ENCODE measurements at regions of chr15 and their contacts with region 1.

Region 1: DNA sequence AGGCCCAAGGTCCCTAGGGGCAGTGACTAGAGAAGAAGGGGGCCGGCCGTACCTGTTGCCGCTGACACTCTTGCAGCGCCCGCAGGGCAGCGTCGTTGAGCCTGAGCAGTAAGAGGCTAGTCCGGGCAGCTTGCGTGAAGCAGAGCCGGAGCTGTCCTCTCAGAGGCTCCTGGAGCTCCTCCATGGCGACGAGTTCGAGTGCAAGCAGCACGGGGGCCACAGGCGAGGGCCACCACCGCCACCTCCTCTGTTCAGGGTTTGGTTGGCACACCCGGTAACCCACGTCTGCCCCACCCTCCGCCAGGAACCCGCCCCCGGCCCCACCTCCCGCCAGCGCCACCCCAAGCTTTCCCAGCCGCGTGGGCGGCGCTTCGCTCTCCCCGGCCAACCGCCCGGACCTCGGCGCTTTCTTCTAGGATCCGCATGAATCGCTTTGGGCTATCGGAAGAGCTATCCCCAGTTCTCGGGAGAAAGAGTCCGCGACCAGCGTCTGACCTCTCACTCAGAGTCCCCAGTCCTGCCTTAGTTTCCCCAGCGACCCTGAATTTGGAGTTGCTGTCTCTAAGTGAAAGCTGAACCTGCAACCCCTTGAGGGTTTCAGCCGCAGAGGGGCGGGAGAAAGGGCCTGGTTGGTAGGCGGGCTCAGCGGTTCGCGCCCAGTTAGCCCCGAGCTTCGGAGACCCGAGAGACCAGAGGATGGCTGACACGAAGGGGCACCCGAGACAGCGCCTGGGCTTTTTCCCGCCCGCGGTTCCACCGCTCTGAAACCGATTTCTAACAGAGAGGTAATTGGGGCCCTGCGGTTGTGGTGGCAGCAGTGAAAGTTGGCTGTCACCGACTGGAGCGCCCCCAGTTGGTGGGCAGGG is at the start of gene ELL3:
- DNase-seq: peak; percentile 55

Region 2: DNA sequence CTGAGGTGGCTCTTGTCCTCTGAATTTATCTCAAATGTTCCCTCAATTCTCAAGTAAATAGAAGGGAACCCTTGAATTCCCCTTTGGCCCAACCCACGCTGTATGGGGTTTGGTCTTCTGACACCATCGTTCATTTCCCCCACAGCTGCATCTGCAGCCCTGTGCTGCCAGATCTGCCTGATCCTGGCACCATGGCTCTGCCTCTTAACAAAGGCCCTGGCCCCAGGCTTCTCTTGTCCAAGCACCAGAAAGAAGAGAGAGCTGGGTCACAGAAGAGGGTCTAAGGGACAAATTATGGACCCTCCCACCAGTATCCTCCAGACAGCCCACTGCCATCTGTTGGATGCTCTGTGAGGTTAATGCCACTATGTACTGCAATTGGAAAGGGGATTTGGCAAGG is 257.8 kb before region 1 on chr15:
- CTCF ChIA-PET with region 1: no interaction called
- POLR2A ChIA-PET with region 1: no interaction called
- DNase-seq: no peak

Region 3: DNA sequence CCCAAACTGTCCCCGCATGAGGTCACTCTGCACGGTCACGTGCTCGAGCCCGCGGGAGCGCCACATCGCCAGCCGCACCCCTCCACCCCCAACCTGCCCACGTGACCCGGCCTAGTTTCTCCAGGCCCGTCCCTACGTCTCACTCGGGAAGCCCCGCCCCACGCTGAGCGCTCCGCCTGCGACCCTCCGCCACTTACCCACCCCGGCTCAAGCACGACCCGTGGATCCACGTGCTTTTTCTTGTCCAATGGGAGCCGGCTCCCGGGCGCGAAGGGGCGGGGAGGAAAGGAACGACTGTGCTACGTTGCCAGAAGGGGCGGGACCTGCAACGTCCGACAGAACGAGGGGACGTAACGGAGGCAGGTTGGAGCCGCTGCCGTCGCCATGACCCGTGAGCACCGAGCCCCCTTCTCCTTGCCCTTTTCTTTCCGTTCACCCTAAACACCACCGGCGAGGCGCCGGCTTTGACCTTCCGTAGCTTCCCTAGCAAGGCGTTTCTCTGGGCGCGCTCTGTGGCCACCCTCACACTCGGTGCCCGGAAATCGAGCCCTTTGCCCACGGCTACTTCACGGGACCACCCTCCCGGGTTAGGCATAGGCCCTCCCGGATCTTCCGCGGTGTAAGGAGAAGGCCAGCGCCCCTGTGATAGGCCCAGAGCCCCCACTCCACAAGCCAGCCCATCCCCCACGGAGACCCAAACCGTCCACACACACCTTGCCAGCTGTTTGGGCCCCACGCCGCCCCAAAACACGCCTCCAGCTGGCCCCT is 15.2 kb after region 1 on chr15 and contains the start of gene SERF2:
- CTCF ChIA-PET with region 1: interaction called, 13 read pairs
- POLR2A ChIA-PET with region 1: interaction called, 33 read pairs
- DNase-seq: peak; percentile 92

Region 4: DNA sequence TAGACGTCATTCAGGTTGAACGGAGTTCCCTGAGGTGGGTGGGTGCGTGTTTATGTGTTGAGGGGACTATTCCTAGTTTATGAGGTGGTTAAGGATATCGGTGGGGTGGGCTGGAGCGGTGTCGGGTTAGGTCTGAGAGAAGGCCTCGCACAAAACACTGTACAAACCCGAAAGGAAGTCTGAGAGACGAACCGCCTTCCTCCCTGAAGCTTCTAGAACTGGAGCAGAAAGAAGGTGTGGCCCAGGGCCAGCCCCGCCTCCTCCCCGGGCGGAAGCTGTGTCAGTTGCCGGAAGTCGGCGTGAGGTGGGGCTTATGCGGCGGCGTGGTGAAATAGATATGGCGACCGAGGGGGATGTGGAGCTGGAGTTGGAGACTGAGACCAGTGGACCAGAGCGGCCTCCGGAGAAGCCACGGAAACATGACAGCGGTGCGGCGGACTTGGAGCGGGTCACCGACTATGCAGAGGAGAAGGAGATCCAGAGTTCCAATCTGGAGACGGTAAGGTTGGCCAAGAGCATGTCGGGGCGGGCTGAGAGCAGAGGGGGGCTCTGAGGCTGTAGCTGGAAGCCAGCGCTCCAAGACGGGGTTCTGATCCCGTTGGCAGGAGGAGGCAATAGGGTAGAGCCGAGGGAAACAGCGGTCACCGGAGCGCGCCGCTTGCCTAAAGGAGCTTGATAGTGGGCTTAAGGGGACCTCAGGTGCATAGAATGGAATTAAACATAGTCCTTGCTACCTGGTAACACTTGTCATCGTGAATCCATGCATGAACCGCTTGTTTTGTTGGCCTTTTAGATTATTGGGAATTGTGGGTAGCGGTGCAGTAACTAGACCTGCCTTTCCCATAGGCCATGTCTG is 23.6 kb after region 1 on chr15 and contains the start of gene HYPK:
- CTCF ChIA-PET with region 1: interaction called, 4 read pairs
- POLR2A ChIA-PET with region 1: interaction called, 11 read pairs
- DNase-seq: peak; percentile 70

Region 5: DNA sequence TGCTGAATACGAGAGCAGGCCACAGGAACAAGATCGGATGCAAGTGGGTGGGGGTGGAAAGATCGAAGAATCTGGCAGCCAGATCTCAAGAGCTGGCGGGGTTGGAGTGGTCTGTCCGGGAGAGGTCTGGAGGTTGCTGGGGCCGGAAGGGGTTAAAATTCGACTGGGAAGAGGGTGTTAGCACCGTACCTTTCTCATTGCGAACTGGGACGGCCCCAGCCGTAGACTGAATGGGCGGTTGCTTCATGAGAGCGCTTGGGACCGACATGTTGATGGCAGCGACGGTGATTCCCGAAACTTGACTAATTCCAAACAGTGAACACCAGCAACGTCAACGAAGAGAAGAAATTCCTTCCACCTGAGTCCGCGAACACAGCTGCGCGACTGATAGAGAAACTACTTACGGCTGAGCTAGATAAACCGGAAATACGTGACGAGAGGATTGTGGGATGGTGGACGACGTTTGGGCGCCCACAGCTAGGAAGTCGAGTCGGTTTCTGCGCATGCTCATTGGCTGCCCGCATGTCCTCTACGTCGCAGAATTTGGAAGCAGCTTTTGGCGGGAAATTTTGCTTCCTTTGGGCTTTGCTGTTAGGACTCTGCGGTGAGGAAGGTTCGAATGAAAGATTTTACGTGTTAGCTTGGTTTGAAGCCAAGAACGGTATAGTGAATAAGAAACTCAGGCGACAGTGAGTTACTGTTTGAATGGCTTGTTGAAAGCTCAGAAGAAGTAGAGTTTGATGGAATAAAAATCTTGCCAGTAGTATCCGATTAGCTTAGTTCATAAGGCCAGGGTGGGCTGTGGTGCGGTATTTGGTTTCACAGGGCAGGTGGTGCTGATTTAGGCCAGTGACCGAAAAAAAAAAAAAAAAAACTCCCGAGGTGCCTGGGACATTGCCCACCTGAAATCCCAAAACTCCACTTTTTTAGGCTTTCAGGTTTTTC is 47.6 kb after region 1 on chr15 and contains the start of gene MFAP1:
- CTCF ChIA-PET with region 1: no interaction called
- POLR2A ChIA-PET with region 1: interaction called, 11 read pairs
- DNase-seq: peak; percentile 83

Region 6: DNA sequence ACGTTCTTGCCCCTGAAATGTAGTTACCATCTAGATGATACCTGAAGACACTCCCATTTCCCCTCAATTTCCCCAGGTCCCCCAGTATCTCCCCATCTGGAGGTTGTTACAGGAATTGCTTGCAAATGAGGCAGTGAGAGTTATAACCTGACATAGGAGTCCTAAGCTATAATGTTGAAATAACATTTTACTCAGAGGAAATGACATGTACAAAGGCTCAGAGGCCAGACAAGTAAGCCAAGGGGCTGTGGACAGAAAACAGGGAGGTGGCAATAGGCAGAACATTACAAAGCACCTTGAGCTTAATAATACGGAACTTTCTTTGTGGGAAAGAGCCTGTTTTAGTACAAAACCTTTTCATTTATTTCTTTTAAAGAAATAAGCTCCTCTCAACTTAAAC is 246.2 kb after region 1 on chr15:
- CTCF ChIA-PET with region 1: no interaction called
- POLR2A ChIA-PET with region 1: no interaction called
- DNase-seq: no peak